ENCODE measurements at regions of chr10 and their contacts with region 1.

Region 1: GRCh38 chr10:50417886-50418830 is 166.8 kb upstream of the ASAH2 start:
- DNase-seq: peak; percentile 91
- H3K4me3 ChIP-seq: peak overlapping the region; percentile 72 to 91 (median 89)
- H3K27ac ChIP-seq: peak overlapping the region; percentile 88
- H3K4me1 ChIP-seq: peaks cover 8% of the 10 kb centered on the region
- H3K27me3 ChIP-seq: no peaks in the 10 kb centered on the region
- CTCF ChIP-seq: peak in 1 of 2 donors; percentile 11

Region 2: GRCh38 chr10:50291261-50291850 is 126.8 kb before region 1 on chr10:
- CTCF ChIA-PET with region 1: interaction called, 3 read pairs
- dilution Hi-C with region 1: no loop called
- in situ Hi-C with region 1: no loop called
- intact Hi-C with region 1: loop called (anchors 1 kb)
- DNase-seq: no peak
- H3K4me3 ChIP-seq: no peak overlapping the region
- H3K27ac ChIP-seq: no peak overlapping the region
- H3K4me1 ChIP-seq: no peaks in the 10 kb centered on the region
- H3K27me3 ChIP-seq: no peaks in the 10 kb centered on the region
- CTCF ChIP-seq: peak; percentile 30 to 71

Region 3: GRCh38 chr10:50325449-50326171 is 92.5 kb before region 1 on chr10:
- CTCF ChIA-PET with region 1: no interaction called
- dilution Hi-C with region 1: loop called (anchors 10 kb)
- in situ Hi-C with region 1: no loop called
- intact Hi-C with region 1: loop called (anchors 1 kb)
- DNase-seq: peak; percentile 95
- H3K4me3 ChIP-seq: peak overlapping the region in 2 of 3 experiments; percentile 23 to 32
- H3K27ac ChIP-seq: peak overlapping the region; percentile 78
- H3K4me1 ChIP-seq: peaks cover 40% of the 10 kb centered on the region
- H3K27me3 ChIP-seq: no peaks in the 10 kb centered on the region
- CTCF ChIP-seq: no peak

Region 4: GRCh38 chr10:50367732-50368131 is 50.4 kb before region 1 on chr10:
- CTCF ChIA-PET with region 1: interaction called, 4 read pairs
- dilution Hi-C with region 1: no loop called
- in situ Hi-C with region 1: no loop called
- intact Hi-C with region 1: loop called (anchors 1 kb)
- DNase-seq: peak; percentile 25
- H3K4me3 ChIP-seq: no peak overlapping the region
- H3K27ac ChIP-seq: no peak overlapping the region
- H3K4me1 ChIP-seq: no peaks in the 10 kb centered on the region
- H3K27me3 ChIP-seq: no peaks in the 10 kb centered on the region
- CTCF ChIP-seq: peak; percentile 33 to 46

Region 5: DNA sequence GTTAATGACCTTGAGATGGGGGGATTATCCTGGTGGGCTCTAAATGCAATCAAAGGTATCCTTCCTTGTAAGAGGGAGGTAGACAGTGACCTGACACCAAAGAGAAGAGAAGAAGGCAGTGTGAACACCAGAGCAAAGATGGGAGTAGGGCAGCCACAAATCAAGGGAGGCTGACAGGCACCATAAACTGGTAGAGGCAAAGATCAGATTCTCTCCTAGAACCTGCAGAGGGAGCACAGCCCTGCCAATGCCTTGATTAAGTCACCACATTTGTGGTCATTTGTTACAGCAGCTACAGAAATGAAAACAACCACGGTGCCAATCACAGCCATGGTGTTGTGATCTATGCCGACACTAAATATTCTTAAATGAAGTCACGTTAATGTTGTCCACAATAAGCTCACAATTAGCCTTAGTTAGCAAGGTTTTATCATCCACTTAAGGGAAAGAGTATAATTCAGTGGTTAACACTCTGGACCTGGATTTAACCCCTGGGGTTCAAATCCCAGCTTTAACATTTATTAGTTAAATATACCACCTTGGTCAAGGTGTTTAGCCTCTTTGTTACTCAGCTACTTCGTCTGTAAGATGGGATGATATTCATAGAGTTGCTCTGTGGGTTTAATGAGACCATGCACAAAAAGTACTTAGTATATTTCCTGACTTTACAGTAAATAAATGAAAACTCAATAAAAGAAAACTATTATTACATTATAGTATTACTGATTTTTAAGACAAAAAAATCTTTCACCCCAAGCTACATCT is 134.8 kb after region 1 on chr10:
- CTCF ChIA-PET with region 1: no interaction called
- dilution Hi-C with region 1: no loop called
- in situ Hi-C with region 1: no loop called
- intact Hi-C with region 1: loop called (anchors 10 kb)
- DNase-seq: no peak
- H3K4me3 ChIP-seq: no peak overlapping the region
- H3K27ac ChIP-seq: no peak overlapping the region
- H3K4me1 ChIP-seq: no peaks in the 10 kb centered on the region
- H3K27me3 ChIP-seq: no peaks in the 10 kb centered on the region
- CTCF ChIP-seq: peak; percentile 22 to 43

Measured in mammary epithelial cell (primary cell).